Mammary epithelial cell (primary cell): ENCODE measurements at regions of chr1 and their contacts with region 1.

Region 1: GRCh38 chr1:53697721-53698383 is 41.1 kb downstream of the GLIS1 start:
- DNase-seq: no peak
- H3K4me3 ChIP-seq: no peak overlapping the region
- H3K27ac ChIP-seq: no peak overlapping the region
- H3K4me1 ChIP-seq: no peaks in the 10 kb centered on the region
- H3K27me3 ChIP-seq: no peaks in the 10 kb centered on the region
- CTCF ChIP-seq: no peak

Region 2: GRCh38 chr1:53644909-53645689 is 52.8 kb before region 1 on chr1:
- CTCF ChIA-PET with region 1: no interaction called
- dilution Hi-C with region 1: loop called (anchors 10 kb)
- in situ Hi-C with region 1: no loop called
- intact Hi-C with region 1: no loop called
- DNase-seq: no peak
- H3K4me3 ChIP-seq: no peak overlapping the region
- H3K27ac ChIP-seq: no peak overlapping the region
- H3K4me1 ChIP-seq: no peaks in the 10 kb centered on the region
- H3K27me3 ChIP-seq: peaks cover 2% of the 10 kb centered on the region
- CTCF ChIP-seq: no peak